Activated B cell treated with CpG ODN at 0.5 μM for 24 hours (primary cell): ENCODE measurements at regions of chr4 and their contacts with region 1.

Region 1: DNA sequence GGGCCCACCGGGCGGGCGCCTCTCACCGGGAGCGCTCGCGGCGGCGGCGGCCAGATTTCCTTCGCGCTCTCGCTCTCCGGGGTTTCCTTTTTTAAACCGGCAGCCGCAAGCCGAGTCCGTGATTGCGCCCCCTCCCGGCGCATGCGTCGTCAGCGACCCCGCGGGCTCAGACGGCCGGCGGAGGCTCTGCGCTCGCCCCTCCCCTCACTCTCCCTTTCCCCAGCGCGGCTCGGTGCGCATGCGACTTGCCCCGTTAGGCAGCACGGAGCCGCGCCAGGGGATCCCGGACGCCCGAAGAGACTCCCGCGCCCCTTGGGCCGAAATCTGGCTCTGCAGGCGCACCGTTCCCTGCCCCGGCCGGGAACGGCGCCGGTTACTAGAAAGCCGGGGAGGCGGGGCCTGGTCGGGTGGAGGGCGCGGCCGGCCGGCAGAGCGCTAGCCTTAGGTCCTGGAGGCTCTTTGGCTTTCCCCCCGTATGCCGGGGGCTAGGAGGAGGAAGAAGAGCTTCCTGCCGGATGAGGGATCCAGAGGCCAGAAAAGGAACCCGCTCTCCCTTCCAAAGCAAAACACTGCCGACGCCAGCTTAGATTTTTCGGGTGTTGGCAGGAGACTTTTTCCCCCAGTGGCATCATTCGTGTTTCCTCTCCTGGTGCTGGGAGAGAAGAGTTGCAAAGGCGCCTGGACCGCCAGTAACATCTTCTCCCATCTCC is at the start of gene CLOCK:
- DNase-seq: peak; percentile 88
- ATAC-seq: peak; percentile 76
- H3K4me3 Mint-ChIP-seq: peak within 1 kb of the TSS; percentile 92
- H3K27ac Mint-ChIP-seq: peak within 1 kb of the TSS; percentile 90
- H3K4me1 Mint-ChIP-seq: peaks cover 29% of the 10 kb centered on the region
- H3K27me3 Mint-ChIP-seq: peaks cover 6% of the 10 kb centered on the region
- CTCF ChIP-seq: no peak
- total RNA-seq, gene CLOCK: 10.4 and 12.9 TPM in 2 replicates

Region 2: GRCh38 chr4:55345980-55346850 is 200.7 kb before region 1 on chr4 and contains the start of gene SRD5A3:
- CTCF ChIA-PET with region 1: interaction called, 4 read pairs
- POLR2A ChIA-PET with region 1: interaction called, 4 read pairs
- intact Hi-C with region 1: loop called (anchors 2 kb)
- DNase-seq: peak; percentile 87
- ATAC-seq: peak; percentile 89
- H3K4me3 Mint-ChIP-seq: peak within 1 kb of the TSS; percentile 93
- H3K27ac Mint-ChIP-seq: peak within 1 kb of the TSS; percentile 94
- H3K4me1 Mint-ChIP-seq: peaks cover 13% of the 10 kb centered on the region
- H3K27me3 Mint-ChIP-seq: peaks cover under 1% of the 10 kb centered on the region
- CTCF ChIP-seq: no peak
- total RNA-seq, gene SRD5A3: 4.5 and 5.7 TPM in 2 replicates

Region 3: DNA sequence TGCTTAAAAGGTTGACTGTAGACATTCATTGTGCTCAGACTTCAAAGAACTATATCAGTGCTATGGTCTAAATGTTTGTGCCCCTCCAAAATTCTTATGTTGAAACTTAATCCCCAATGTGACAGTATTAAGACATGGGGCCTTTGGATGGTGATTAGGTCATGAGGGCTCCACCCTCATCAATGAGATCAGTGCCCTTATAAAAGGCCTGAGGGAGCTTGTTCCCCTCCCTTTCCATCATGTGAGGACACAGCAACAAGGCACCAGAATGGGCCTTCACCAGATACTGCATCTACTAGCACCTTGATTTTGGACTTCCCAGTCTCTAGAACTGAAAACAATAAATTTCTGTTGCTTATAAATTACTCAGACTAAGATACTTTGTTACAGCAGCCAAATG is 28.5 kb before region 1 on chr4:
- CTCF ChIA-PET with region 1: no interaction called
- POLR2A ChIA-PET with region 1: no interaction called
- intact Hi-C with region 1: no loop called
- DNase-seq: no peak
- ATAC-seq: no peak
- H3K4me3 Mint-ChIP-seq: no peak overlapping the region
- H3K27ac Mint-ChIP-seq: no peak overlapping the region
- H3K4me1 Mint-ChIP-seq: peaks cover 3% of the 10 kb centered on the region
- H3K27me3 Mint-ChIP-seq: no peaks in the 10 kb centered on the region
- CTCF ChIP-seq: no peak

Region 4: DNA sequence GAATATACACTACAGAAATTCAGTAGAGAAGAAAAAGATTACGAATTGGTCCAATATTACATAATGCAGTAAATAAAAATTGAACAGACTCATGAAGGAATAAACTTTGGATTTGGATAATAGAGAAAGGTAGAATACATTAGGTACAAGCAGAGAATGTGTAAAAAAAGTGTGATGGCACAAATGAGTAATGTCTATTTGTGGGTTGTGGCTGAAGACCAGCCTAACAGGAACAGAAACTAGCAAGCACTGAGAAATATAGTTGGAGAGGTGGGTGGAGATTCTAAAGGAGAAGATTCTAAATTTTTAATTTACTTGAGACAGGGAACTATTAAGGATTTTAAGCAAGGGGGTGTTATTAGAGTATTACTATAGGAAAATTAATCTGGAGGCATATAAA is 15.0 kb after region 1 on chr4:
- CTCF ChIA-PET with region 1: interaction called, 5 read pairs
- POLR2A ChIA-PET with region 1: interaction called, 16 read pairs
- intact Hi-C with region 1: loop called (anchors 1 kb)
- DNase-seq: no peak
- ATAC-seq: peak; percentile 98
- H3K4me3 Mint-ChIP-seq: peak overlapping the region; percentile 9
- H3K27ac Mint-ChIP-seq: peak overlapping the region; percentile 30
- H3K4me1 Mint-ChIP-seq: peaks cover 20% of the 10 kb centered on the region
- H3K27me3 Mint-ChIP-seq: no peaks in the 10 kb centered on the region
- CTCF ChIP-seq: no peak

Region 5: DNA sequence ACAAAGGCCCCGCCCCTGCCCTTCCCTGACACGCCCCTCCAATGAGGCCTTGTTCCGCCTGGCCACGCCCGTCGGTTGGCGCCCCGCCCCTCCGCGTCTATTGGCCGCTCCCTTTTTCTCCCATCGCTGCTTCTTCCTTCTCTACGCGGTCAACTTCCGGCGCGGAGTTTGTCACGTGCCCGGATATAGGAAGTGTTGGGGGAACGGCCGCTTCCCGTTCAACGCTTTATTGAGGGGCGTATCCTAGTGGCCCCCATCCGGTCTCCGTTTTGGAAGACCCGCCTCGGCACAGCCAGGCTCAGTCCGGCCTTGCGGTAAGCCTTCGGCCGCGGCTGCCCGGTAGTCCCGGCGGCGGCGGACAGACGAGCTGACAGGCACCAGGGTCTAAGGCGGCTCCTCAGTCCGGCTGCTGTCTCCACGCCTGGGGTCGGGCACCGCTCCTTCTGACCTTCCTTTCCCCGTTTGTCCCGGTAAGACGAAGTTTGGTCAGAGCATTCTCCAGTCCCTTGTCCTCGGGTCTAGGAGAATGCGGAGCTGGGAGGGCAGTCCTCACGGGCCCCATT is 306.7 kb after region 1 on chr4 and contains the start of gene EXOC1:
- CTCF ChIA-PET with region 1: no interaction called
- POLR2A ChIA-PET with region 1: interaction called, 7 read pairs
- intact Hi-C with region 1: loop called (anchors 1 kb)
- DNase-seq: peak; percentile 97
- ATAC-seq: peak; percentile 99
- H3K4me3 Mint-ChIP-seq: no peak within 1 kb of the TSS
- H3K27ac Mint-ChIP-seq: peak within 1 kb of the TSS; percentile 85
- H3K4me1 Mint-ChIP-seq: peaks cover 15% of the 10 kb centered on the region
- H3K27me3 Mint-ChIP-seq: peaks cover 8% of the 10 kb centered on the region
- CTCF ChIP-seq: no peak
- total RNA-seq, gene EXOC1: 28.7 and 34.8 TPM in 2 replicates

Region 6: GRCh38 chr4:56387023-56388001 is 840.4 kb after region 1 on chr4 and contains the start of gene AASDH:
- CTCF ChIA-PET with region 1: no interaction called
- POLR2A ChIA-PET with region 1: interaction called, 9 read pairs
- intact Hi-C with region 1: loop called (anchors 5 kb)
- DNase-seq: peak; percentile 96
- ATAC-seq: peak; percentile 90
- H3K4me3 Mint-ChIP-seq: peak within 1 kb of the TSS; percentile 93
- H3K27ac Mint-ChIP-seq: peak within 1 kb of the TSS; percentile 99
- H3K4me1 Mint-ChIP-seq: peaks cover 27% of the 10 kb centered on the region
- H3K27me3 Mint-ChIP-seq: no peaks in the 10 kb centered on the region
- CTCF ChIP-seq: no peak
- total RNA-seq, gene AASDH: 12.8 and 14.2 TPM in 2 replicates

Region 7: GRCh38 chr4:56977321-56978012 is 1430.6 kb after region 1 on chr4 and contains the start of gene NOA1:
- CTCF ChIA-PET with region 1: no interaction called
- POLR2A ChIA-PET with region 1: interaction called, 7 read pairs
- intact Hi-C with region 1: loop called (anchors 1 kb)
- DNase-seq: peak; percentile 98
- ATAC-seq: peak; percentile 86
- H3K4me3 Mint-ChIP-seq: peak within 1 kb of the TSS; percentile 99
- H3K27ac Mint-ChIP-seq: peak within 1 kb of the TSS; percentile 96
- H3K4me1 Mint-ChIP-seq: peaks cover 70% of the 10 kb centered on the region
- H3K27me3 Mint-ChIP-seq: no peaks in the 10 kb centered on the region
- CTCF ChIP-seq: no peak
- total RNA-seq, gene NOA1: 24.1 and 25.0 TPM in 2 replicates